ENCODE measurements at regions of chr1 and their contacts with region 1.

Region 1: DNA sequence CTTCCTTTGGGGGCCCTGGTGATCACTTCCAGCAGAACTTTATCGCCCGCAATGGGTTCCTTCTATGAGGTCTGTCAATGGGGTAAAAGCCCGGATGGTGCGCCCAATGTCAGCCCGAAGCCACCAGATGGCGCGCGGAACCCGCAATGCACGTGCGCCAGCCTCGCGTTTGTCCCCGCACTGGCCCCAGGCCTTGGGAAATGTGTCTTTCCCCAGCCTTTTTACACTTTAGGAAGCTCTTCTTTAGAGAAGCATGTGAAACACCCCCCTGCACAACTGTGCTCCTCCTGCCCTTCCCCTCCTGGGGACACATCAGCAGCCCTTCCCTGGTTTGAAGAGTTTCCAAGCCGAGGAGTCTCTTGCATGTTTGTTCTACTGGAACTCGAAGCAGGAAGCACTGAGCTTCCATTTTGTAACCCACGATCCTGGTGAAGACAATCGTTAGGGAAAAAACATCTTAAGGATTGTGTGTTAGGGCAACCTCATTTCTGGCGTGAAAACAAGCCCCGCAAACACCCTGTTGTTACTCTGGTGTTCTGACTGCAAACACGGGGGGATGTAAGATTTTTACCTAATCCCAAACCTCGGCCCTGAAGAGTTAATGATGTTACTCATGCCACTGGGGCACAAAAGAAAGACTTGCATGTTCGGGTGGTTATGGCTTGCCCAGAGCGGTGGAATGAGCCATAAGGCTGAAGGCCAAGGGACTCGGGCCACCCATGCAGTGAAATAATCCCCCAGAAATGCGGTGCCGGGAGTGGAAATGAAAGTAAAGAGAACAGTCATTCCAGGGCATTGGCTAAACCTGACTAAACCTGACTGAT is 20.4 kb upstream of the TARBP1 start:
- DNase-seq: peak; percentile 89 to 95 (median 91)
- ATAC-seq: peak; percentile 93 to 98 (median 96)
- H3K4me3 ChIP-seq: peak overlapping the region in 7 of 12 donors; percentile 4 to 22 (median 9)
- H3K27ac ChIP-seq: peak overlapping the region; percentile 51 to 94 (median 86)
- H3K4me1 ChIP-seq: peaks cover 0 to 43% (median 22%) of the 10 kb centered on the region in 12 donors
- H3K27me3 ChIP-seq: no peaks in the 10 kb centered on the region
- CTCF ChIP-seq: peak; percentile 90 to 98 (median 96)
- POLR2A ChIP-seq: peak in 1 of 2 donors; percentile 20

Region 2: GRCh38 chr1:234599617-234600417 is 100.5 kb after region 1 on chr1:
- intact Hi-C with region 1: loop called in 8 of 10 experiments (anchors 2 to 5 kb)
- DNase-seq: peak; percentile 91 to 96 (median 94)
- ATAC-seq: peak; percentile 77 to 95 (median 88)
- H3K4me3 ChIP-seq: peak overlapping the region in 11 of 12 donors; percentile 29 to 86 (median 51)
- H3K27ac ChIP-seq: peak overlapping the region; percentile 88 to 100 (median 99)
- H3K4me1 ChIP-seq: peaks cover 29 to 66% (median 50%) of the 10 kb centered on the region in 12 donors
- H3K27me3 ChIP-seq: no peaks in the 10 kb centered on the region
- CTCF ChIP-seq: peak in 1 of 12 donors; percentile 10
- POLR2A ChIP-seq: peak in 1 of 2 donors; percentile 74

Region 3: DNA sequence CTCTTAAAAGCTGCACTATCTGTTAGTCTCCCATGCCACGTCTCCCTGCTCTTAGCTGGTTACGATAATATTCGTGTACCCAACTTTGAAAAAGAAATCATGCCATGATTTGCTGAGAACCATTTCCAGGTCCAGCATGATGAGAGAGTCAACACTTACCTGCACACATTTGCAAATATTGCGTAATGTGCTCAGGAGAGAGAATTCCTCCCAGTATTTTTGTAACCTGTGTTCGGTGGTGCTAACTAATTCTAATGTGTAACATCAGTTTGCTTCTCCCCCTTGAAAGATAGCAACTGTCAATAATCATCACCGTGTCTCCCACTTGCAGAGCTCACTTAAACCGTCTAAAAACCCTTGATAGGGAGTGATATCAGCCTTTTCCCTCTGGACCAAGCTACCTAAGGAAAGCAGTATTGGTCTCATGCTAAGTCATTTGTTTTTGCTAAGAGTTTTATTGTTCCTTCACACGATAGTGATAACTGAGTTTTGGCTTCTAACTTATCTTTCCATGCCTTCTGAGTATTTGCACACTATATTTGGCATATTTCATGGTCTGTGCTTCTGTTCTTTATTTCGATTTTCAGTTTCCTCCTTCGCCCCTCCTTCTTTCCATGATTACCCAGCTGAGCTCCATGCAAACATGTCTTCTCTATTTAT is 171.8 kb after region 1 on chr1:
- intact Hi-C with region 1: no loop called
- DNase-seq: no peak
- ATAC-seq: no peak
- H3K4me3 ChIP-seq: no peak overlapping the region
- H3K27ac ChIP-seq: no peak overlapping the region
- H3K4me1 ChIP-seq: peaks cover 0 to 18% (median 3%) of the 10 kb centered on the region in 12 donors
- H3K27me3 ChIP-seq: no peaks in the 10 kb centered on the region
- CTCF ChIP-seq: no peak
- POLR2A ChIP-seq: no peak

Region 4: GRCh38 chr1:234862944-234863515 is 363.7 kb after region 1 on chr1:
- intact Hi-C with region 1: loop called in 1 of 10 experiments (anchors 5 kb)
- DNase-seq: peak; percentile 79 to 88 (median 85)
- ATAC-seq: peak; percentile 62 to 79 (median 73)
- H3K4me3 ChIP-seq: peak overlapping the region in 5 of 12 donors; percentile 1 to 27 (median 8)
- H3K27ac ChIP-seq: peak overlapping the region; percentile 63 to 82 (median 77)
- H3K4me1 ChIP-seq: peaks cover 0 to 46% (median 32%) of the 10 kb centered on the region in 12 donors
- H3K27me3 ChIP-seq: no peaks in the 10 kb centered on the region
- CTCF ChIP-seq: no peak
- POLR2A ChIP-seq: no peak

Region 5: GRCh38 chr1:234978397-234979295 is 479.3 kb after region 1 on chr1:
- intact Hi-C with region 1: loop called in 1 of 10 experiments (anchors 10 kb)
- DNase-seq: peak in 4 of 5 donors; percentile 48 to 71 (median 60)
- ATAC-seq: peak; percentile 7 to 51 (median 22)
- H3K4me3 ChIP-seq: peak overlapping the region in 2 of 12 donors; percentile 15 to 55
- H3K27ac ChIP-seq: peak overlapping the region; percentile 71 to 98 (median 88)
- H3K4me1 ChIP-seq: peaks cover 15 to 91% (median 45%) of the 10 kb centered on the region in 12 donors
- H3K27me3 ChIP-seq: no peaks in the 10 kb centered on the region
- CTCF ChIP-seq: peak in 5 of 12 donors; percentile 6 to 39 (median 19)
- POLR2A ChIP-seq: no peak

Region 6: GRCh38 chr1:235087896-235088295 is 588.6 kb after region 1 on chr1:
- intact Hi-C with region 1: loop called in 9 of 10 experiments (anchors 1 to 5 kb)
- DNase-seq: no peak
- ATAC-seq: no peak
- H3K4me3 ChIP-seq: no peak overlapping the region
- H3K27ac ChIP-seq: no peak overlapping the region
- H3K4me1 ChIP-seq: peaks cover 0 to 16% (median 14%) of the 10 kb centered on the region in 12 donors
- H3K27me3 ChIP-seq: no peaks in the 10 kb centered on the region
- CTCF ChIP-seq: no peak
- POLR2A ChIP-seq: no peak

Measured in heart left ventricle (tissue), 16 donors.